ENCODE measurements at regions of chr1 and their contacts with region 1.

Region 1: DNA sequence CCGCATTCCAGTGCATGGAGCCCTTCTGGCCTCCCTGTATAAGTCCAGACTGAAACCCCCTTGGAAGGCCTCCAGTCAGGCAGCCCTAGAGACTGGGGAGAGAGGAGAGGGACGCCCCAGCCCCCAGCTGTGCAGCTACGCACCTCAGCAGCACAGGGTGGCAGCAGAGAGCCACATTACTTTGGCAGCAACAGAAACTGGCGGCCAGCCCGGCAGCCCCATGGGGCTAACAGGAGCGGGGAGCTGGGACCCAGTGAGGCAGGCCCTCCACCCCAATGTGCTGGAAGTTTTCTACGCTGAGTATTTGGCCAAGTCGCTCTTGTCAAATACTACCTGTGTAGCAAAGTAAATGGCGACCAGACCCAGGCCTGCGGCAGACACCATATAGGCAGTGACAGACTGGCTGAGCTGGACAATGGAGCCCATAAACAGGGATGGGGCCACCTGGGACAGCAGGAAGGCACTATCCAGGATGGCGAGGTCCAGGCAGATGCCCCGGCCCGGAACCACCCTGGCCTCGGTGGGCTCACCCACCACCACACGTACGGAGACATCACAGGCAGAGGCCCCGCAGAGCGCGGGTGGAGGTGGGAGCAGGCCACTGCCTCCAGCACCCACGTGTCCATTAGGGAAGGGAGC is 21.2 kb downstream of the SLC45A3 start:
- DNase-seq: peak; percentile 39 to 76 (median 65)
- ATAC-seq: peak; percentile 91
- H3K4me3 ChIP-seq: no peak overlapping the region
- H3K4me3 Mint-ChIP-seq: no peak overlapping the region
- H3K27ac ChIP-seq: no peak overlapping the region
- H3K27ac Mint-ChIP-seq: peak overlapping the region in 1 of 9 donors; percentile 50
- H3K4me1 ChIP-seq: no peaks in the 10 kb centered on the region
- H3K4me1 Mint-ChIP-seq: peaks cover 0 to 9% (median 0%) of the 10 kb centered on the region in 7 donors
- H3K27me3 ChIP-seq: no peaks in the 10 kb centered on the region
- H3K27me3 Mint-ChIP-seq: peaks cover 0 to 5% (median 0%) of the 10 kb centered on the region in 5 donors

Region 2: DNA sequence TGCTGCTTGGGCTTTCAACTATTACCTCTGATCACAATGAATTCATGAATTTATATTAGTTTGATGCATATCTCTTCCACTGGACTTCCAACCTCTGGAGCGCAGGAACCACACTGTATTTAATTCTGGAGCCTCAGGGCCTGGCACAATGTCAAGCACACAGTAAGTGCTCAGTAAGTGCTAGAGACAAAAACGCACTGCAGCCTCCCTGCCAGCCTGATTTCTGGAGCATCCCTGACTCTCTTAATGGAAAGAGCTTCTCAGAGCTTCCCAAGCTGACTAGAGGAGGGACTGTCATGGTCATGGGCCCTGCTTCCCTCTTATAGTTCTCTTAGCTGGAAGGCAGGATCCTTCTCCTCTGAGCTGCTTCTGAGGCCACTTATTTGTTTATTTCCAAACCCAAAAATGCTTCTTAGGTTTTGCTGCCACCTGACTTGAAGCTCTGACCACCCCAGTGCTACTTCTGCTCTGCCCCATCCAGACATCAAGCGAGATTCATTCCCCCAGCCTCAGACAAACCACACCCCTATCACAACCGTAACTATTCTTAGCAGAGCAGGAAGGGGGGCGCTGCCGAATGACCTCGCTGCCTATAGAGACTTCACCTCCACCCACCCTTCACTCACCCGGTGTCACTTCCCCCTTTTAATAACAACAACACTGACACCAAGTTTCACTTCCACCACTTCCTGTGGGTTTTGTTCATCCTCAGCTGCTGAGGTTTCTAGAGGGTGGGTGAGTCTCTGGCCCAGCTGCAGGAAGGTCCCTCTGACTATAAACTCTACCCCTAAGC is 371.1 kb before region 1 on chr1:
- CTCF ChIA-PET with region 1: no interaction called
- POLR2A ChIA-PET with region 1: no interaction called
- intact Hi-C with region 1: no loop called
- DNase-seq: peak; percentile 34 to 94 (median 91)
- ATAC-seq: peak; percentile 80
- H3K4me3 ChIP-seq: peak overlapping the region; percentile 60
- H3K4me3 Mint-ChIP-seq: peak overlapping the region; percentile 63 to 89 (median 80)
- H3K27ac ChIP-seq: peak overlapping the region; percentile 83
- H3K27ac Mint-ChIP-seq: peak overlapping the region; percentile 90 to 99 (median 97)
- H3K4me1 ChIP-seq: peaks cover 60 to 71% of the 10 kb centered on the region in 2 donors
- H3K4me1 Mint-ChIP-seq: peaks cover 64 to 95% (median 81%) of the 10 kb centered on the region in 7 donors
- H3K27me3 ChIP-seq: no peaks in the 10 kb centered on the region
- H3K27me3 Mint-ChIP-seq: peaks cover 0 to 11% (median 0%) of the 10 kb centered on the region in 5 donors

Region 3: GRCh38 chr1:205485338-205486228 is 173.5 kb before region 1 on chr1:
- CTCF ChIA-PET with region 1: interaction called, 8 read pairs
- POLR2A ChIA-PET with region 1: interaction called, 3 read pairs
- intact Hi-C with region 1: loop called in 1 of 2 experiments (anchors 5 kb)
- DNase-seq: peak; percentile 37 to 75 (median 64)
- ATAC-seq: peak; percentile 84
- H3K4me3 ChIP-seq: no peak overlapping the region
- H3K4me3 Mint-ChIP-seq: no peak overlapping the region
- H3K27ac ChIP-seq: no peak overlapping the region
- H3K27ac Mint-ChIP-seq: no peak overlapping the region
- H3K4me1 ChIP-seq: peaks cover 0 to 19% of the 10 kb centered on the region in 2 donors
- H3K4me1 Mint-ChIP-seq: peaks cover 2 to 30% (median 10%) of the 10 kb centered on the region in 7 donors
- H3K27me3 ChIP-seq: peaks cover 0 to 7% of the 10 kb centered on the region in 2 donors
- H3K27me3 Mint-ChIP-seq: peaks cover 42 to 63% (median 57%) of the 10 kb centered on the region in 5 donors

Region 4: DNA sequence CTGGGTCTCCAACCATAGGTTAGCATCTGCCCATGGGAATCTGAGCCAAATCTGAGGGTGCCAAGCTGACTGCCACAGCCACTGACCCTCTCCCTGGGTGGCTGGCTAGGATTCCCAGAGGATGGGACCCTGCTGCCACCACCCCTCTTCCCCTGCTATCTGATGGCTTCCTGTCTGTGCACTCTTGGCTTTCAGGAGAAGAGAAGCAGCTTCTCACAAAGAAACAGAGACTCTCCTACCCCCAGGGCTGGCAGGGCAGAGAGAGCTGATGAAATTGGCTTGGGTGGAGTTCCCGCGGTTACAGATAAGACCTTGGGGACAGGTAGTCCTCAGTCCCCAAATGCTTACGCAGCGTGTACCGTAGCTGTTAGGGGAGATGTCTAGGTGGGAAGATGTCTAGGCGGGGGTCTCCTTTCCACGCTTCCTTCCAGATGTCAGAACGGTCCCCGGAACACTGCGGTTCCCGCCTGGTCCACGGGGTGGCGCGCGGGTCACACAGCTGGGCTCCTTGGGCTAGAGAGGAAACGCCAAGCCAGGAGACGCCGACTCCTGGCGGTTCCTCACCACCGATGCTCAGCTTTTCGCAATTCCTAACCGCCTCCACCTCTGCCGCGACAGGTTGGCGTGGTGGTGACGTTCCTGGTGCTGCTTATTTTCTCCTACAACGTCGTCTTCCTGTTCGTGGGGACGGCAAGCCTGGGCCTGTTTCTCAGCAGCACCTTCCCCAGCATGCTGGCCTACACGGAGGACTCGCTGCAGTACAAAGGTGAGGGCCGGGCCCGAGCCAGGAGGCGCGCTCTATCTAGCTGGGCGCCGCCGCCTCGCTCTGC is 67.3 kb before region 1 on chr1:
- CTCF ChIA-PET with region 1: interaction called, 315 read pairs
- POLR2A ChIA-PET with region 1: interaction called, 40 read pairs
- intact Hi-C with region 1: loop called (anchors 1 kb)
- DNase-seq: peak; percentile 86 to 94 (median 91)
- ATAC-seq: peak; percentile 95
- H3K4me3 ChIP-seq: peak overlapping the region; percentile 55
- H3K4me3 Mint-ChIP-seq: peak overlapping the region; percentile 77 to 97 (median 91)
- H3K27ac ChIP-seq: peak overlapping the region; percentile 85
- H3K27ac Mint-ChIP-seq: peak overlapping the region; percentile 88 to 97 (median 95)
- H3K4me1 ChIP-seq: peaks cover 8 to 32% of the 10 kb centered on the region in 2 donors
- H3K4me1 Mint-ChIP-seq: peaks cover 19 to 65% (median 61%) of the 10 kb centered on the region in 7 donors
- H3K27me3 ChIP-seq: no peaks in the 10 kb centered on the region
- H3K27me3 Mint-ChIP-seq: peaks cover 0 to 4% (median 0%) of the 10 kb centered on the region in 5 donors

Region 5: GRCh38 chr1:205775015-205775716 is 116.1 kb after region 1 on chr1 and contains the start of gene RAB29:
- CTCF ChIA-PET with region 1: interaction called, 23 read pairs
- POLR2A ChIA-PET with region 1: no interaction called
- intact Hi-C with region 1: loop called in 1 of 2 experiments (anchors 1 kb)
- DNase-seq: peak; percentile 67 to 92 (median 86)
- ATAC-seq: peak; percentile 92
- H3K4me3 ChIP-seq: peak within 1 kb of the TSS; percentile 81
- H3K4me3 Mint-ChIP-seq: peak within 1 kb of the TSS; percentile 88 to 100 (median 96)
- H3K27ac ChIP-seq: peak within 1 kb of the TSS; percentile 98
- H3K27ac Mint-ChIP-seq: peak within 1 kb of the TSS; percentile 96 to 100 (median 98)
- H3K4me1 ChIP-seq: peaks cover 17 to 24% of the 10 kb centered on the region in 2 donors
- H3K4me1 Mint-ChIP-seq: peaks cover 33 to 67% (median 60%) of the 10 kb centered on the region in 7 donors
- H3K27me3 ChIP-seq: no peaks in the 10 kb centered on the region
- H3K27me3 Mint-ChIP-seq: peaks cover 0 to 2% (median 0%) of the 10 kb centered on the region in 5 donors
- total RNA-seq, gene RAB29: 23.9 to 55.5 (median 45.9) TPM

Region 6: DNA sequence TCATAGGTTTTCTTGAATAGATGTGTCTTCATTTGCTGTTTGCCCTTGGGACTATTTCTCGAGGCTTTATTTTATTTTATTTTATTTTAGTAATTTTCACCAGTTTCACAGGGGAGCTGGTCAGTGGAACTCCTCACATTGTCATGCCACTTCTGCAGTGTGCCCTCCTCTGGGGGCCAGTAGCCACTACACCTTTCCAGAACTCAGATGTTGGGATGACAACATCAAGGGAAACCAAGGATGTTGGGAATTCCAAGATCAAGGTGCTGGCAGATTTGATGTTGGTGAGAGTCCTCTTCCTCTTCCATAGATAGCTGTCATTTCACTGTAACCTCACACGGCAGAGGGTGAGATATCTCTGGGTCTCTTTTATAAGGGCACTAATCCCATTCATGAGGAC is 248.7 kb after region 1 on chr1:
- CTCF ChIA-PET with region 1: interaction called, 3 read pairs
- POLR2A ChIA-PET with region 1: no interaction called
- intact Hi-C with region 1: loop called in 1 of 2 experiments (anchors 1 kb)
- DNase-seq: no peak
- ATAC-seq: no peak
- H3K4me3 ChIP-seq: no peak overlapping the region
- H3K4me3 Mint-ChIP-seq: no peak overlapping the region
- H3K27ac ChIP-seq: no peak overlapping the region
- H3K27ac Mint-ChIP-seq: no peak overlapping the region
- H3K4me1 ChIP-seq: no peaks in the 10 kb centered on the region
- H3K4me1 Mint-ChIP-seq: no peaks in the 10 kb centered on the region
- H3K27me3 ChIP-seq: no peaks in the 10 kb centered on the region
- H3K27me3 Mint-ChIP-seq: peaks cover 0 to 38% (median 5%) of the 10 kb centered on the region in 5 donors

Region 7: GRCh38 chr1:206106328-206107167 is 447.5 kb after region 1 on chr1:
- CTCF ChIA-PET with region 1: interaction called, 3 read pairs
- POLR2A ChIA-PET with region 1: no interaction called
- intact Hi-C with region 1: loop called in 1 of 2 experiments (anchors 1 kb)
- DNase-seq: peak; percentile 37 to 77 (median 67)
- ATAC-seq: peak; percentile 90
- H3K4me3 ChIP-seq: no peak overlapping the region
- H3K4me3 Mint-ChIP-seq: no peak overlapping the region
- H3K27ac ChIP-seq: no peak overlapping the region
- H3K27ac Mint-ChIP-seq: no peak overlapping the region
- H3K4me1 ChIP-seq: no peaks in the 10 kb centered on the region
- H3K4me1 Mint-ChIP-seq: peaks cover 0 to 6% (median 0%) of the 10 kb centered on the region in 7 donors
- H3K27me3 ChIP-seq: no peaks in the 10 kb centered on the region
- H3K27me3 Mint-ChIP-seq: peaks cover 0 to 33% (median 3%) of the 10 kb centered on the region in 5 donors

Measured in naive thymus-derived CD4-positive, alpha-beta T cell (primary cell).